ENCODE measurements at regions of chr14 and their contacts with region 1.

Region 1: GRCh38 chr14:104137297-104138097 is 890 bp upstream of the KIF26A start:
- DNase-seq: peak; percentile 92
- H3K4me3 ChIP-seq: peak overlapping the region; percentile 51 to 70
- H3K27ac ChIP-seq: peak overlapping the region in 1 of 2 experiments; percentile 90; a peak in 2 of 4 replicates
- H3K4me1 ChIP-seq: peaks cover 0 to 56% of the 10 kb centered on the region in 2 experiments; a peak in 1 of 4 replicates
- H3K27me3 ChIP-seq: peaks cover 17% of the 10 kb centered on the region
- CTCF ChIP-seq: peak; percentile 75
- EP300 ChIP-seq: peak in 1 of 2 experiments; percentile 44; a peak in 1 of 4 replicates
- RAD21 ChIP-seq: peak; percentile 86

Region 2: GRCh38 chr14:104150136-104151027 is 12.9 kb after region 1 on chr14:
- CTCF ChIA-PET with region 1: interaction called, 26 read pairs
- POLR2A ChIA-PET with region 1: interaction called, 3 read pairs
- DNase-seq: peak; percentile 89
- H3K4me3 ChIP-seq: no peak overlapping the region; a peak in 1 of 4 replicates
- H3K27ac ChIP-seq: peak overlapping the region; percentile 47 to 99; a peak in 3 of 4 replicates
- H3K4me1 ChIP-seq: peaks cover 16 to 94% of the 10 kb centered on the region in 2 experiments; a peak in 2 of 4 replicates
- H3K27me3 ChIP-seq: no peaks in the 10 kb centered on the region
- CTCF ChIP-seq: peak; percentile 50
- EP300 ChIP-seq: peak; percentile 32 to 93; a peak in 3 of 4 replicates
- RAD21 ChIP-seq: no peak

Region 3: DNA sequence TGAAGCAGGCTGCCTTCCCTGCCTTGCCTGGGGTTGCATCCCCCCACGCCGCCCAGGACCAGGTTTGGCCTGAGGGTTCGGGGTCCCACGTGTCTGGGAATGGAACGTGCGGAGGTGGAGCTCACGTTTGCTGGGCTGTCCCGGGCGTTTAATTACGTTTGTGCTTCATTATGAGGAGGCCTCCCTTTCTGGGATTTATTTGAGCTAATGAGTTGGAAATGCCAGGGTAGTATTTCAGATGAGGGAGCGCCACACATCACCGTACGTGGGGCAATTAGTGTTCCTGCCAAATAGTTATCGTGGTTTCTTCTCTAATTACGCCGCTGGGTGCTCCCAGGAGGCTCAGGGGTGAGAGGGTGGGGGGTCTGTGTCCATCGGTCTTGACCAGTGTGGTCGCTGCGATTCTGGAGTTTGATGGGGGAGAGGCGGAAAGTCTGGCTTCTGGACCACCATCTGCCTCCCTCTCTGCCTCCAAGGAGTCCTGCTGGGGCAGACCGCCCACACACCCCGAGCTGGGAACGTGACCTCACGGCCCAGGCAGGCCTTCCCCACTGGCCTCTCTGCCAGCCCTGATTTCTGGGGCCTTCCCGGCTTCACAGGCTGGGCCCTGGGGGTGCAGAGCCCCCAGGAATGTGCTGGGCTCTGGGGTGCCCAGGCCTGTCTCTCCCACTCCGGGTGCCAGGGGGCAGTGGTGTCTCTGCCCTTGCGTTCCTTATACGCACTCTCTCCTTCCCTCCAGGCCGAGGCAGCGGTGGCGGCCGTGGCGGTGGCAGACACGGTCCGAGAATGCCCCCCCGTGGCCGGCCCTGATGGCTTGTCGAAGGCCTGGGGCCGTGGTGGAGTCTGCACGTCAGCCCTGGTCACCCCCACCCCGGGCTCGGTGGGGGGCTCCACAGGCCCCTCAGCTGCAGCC is 19.8 kb after region 1 on chr14:
- CTCF ChIA-PET with region 1: interaction called, 26 read pairs
- POLR2A ChIA-PET with region 1: no interaction called
- DNase-seq: peak; percentile 81
- H3K4me3 ChIP-seq: no peak overlapping the region
- H3K27ac ChIP-seq: peak overlapping the region in 1 of 2 experiments; percentile 96; a peak in 2 of 4 replicates
- H3K4me1 ChIP-seq: peaks cover 0 to 92% of the 10 kb centered on the region in 2 experiments; a peak in 1 of 4 replicates
- H3K27me3 ChIP-seq: no peaks in the 10 kb centered on the region
- CTCF ChIP-seq: peak; percentile 16
- EP300 ChIP-seq: no peak
- RAD21 ChIP-seq: peak; percentile 50

Region 4: GRCh38 chr14:104293851-104294627 is 156.5 kb after region 1 on chr14:
- CTCF ChIA-PET with region 1: interaction called, 20 read pairs
- POLR2A ChIA-PET with region 1: no interaction called
- DNase-seq: no peak
- H3K4me3 ChIP-seq: no peak overlapping the region
- H3K27ac ChIP-seq: peak overlapping the region in 1 of 2 experiments; percentile 94; a peak in 1 of 4 replicates
- H3K4me1 ChIP-seq: peaks cover 3 to 87% of the 10 kb centered on the region in 2 experiments; a peak in 2 of 4 replicates
- H3K27me3 ChIP-seq: no peaks in the 10 kb centered on the region
- CTCF ChIP-seq: peak; percentile 21; the same call in 1 of the 2 replicates
- EP300 ChIP-seq: no peak
- RAD21 ChIP-seq: peak; percentile 48

Region 5: DNA sequence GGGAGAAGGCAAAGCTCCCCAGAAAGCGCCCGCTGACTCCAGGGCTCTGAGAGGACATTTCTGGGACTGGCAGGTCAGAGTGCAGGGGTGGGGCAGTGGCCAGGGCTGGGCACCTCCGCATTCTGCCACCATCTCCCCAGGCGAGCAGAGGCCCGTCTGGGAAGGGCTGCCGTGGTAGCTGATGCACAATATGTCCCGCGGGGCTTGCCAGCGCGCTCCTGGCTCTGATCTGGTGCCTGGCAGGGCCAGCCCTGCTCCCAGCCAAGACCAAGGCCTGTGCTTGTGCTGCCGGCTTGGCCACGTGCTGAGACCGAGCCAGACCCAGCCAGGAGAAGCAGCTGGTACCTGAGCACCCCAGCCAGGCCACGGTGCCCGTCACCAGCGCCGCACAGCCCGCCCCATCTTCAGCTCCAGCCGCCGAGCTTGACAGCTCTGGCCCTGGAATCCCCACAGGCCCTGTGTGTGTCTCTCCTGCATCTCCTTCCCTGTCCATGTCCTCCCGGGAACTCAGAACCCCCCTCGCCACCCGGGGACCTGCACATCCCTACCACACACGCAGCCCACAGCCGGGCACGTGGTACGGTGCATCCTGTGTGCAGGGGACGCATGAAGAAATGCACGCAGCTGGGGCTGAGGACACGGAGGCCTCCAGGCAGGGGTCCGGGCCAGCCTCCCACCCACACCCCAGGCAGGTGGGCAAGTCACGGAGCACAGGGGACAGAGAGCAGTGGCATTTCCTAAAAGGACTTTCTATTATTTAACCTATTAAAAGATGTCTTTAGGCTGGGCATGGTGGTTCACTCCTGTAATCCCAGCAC is 373.5 kb after region 1 on chr14:
- CTCF ChIA-PET with region 1: interaction called, 10 read pairs
- POLR2A ChIA-PET with region 1: interaction called, 4 read pairs
- DNase-seq: peak; percentile 71
- H3K4me3 ChIP-seq: no peak overlapping the region
- H3K27ac ChIP-seq: peak overlapping the region in 1 of 2 experiments; percentile 87; a peak in 2 of 4 replicates
- H3K4me1 ChIP-seq: peaks cover 0 to 32% of the 10 kb centered on the region in 2 experiments; a peak in 1 of 4 replicates
- H3K27me3 ChIP-seq: no peaks in the 10 kb centered on the region
- CTCF ChIP-seq: no peak
- EP300 ChIP-seq: no peak
- RAD21 ChIP-seq: no peak

Region 6: GRCh38 chr14:104805941-104806624 is 668.6 kb after region 1 on chr14:
- CTCF ChIA-PET with region 1: no interaction called
- POLR2A ChIA-PET with region 1: no interaction called
- DNase-seq: peak; percentile 28
- H3K4me3 ChIP-seq: no peak overlapping the region
- H3K27ac ChIP-seq: peak overlapping the region in 1 of 2 experiments; percentile 15; a peak in 1 of 4 replicates
- H3K4me1 ChIP-seq: peaks cover 19 to 24% of the 10 kb centered on the region in 2 experiments; a peak in 3 of 4 replicates
- H3K27me3 ChIP-seq: no peaks in the 10 kb centered on the region
- CTCF ChIP-seq: no peak
- EP300 ChIP-seq: no peak
- RAD21 ChIP-seq: no peak

Measured in SK-N-SH (cell line).